ENCODE measurements at regions of chr2 and their contacts with region 1.

Region 1: DNA sequence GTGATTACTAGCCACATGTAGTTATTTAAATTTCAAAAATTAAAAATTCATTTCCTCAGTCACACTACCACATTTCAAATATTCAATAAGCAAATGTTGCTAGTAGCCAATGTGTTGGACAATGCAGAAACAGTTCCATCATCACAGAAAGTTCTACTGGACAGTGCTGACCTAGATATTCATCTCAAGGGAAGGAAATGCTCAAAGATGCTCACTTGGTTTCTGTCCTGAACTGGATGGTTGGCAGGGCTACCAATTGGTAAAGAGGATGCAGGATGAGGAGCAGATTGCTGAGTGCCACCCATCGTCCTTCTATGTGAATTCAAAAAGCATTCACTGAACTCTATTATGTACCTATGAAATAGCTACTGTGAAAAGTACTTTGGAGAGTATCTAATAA is 6.0 kb upstream of the UBXN2A start:
- DNase-seq: no peak
- ATAC-seq: no peak
- H3K4me3 ChIP-seq: no peak overlapping the region
- H3K27ac ChIP-seq: no peak overlapping the region
- H3K4me1 ChIP-seq: peaks cover under 1% of the 10 kb centered on the region; the same call in 1 of the 2 replicates
- H3K27me3 ChIP-seq: no peaks in the 10 kb centered on the region
- CTCF ChIP-seq: no peak
- POLR2A ChIP-seq: no peak
- RAD21 ChIP-seq: no peak

Region 2: DNA sequence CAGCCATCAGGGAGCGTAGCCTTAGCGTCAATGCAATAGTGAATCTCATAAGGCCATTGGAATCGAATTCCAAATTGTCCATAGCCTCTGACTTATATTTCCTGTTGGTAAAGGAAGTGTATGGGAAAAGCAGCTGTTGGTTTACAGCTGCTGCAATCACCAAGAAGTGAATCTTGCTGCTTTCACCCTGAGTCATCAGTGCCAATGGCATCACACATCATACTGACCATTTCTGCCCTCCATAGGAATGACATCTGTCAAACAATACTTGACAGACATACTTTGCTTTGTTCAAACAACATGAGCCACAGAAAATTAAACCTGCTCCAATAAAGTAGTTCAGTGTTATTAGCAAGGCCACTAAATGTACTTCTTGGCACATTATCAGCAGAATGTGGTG is 660.5 kb before region 1 on chr2:
- CTCF ChIA-PET with region 1: no interaction called
- POLR2A ChIA-PET with region 1: no interaction called
- dilution Hi-C with region 1: no loop called
- in situ Hi-C with region 1: no loop called
- intact Hi-C with region 1: no loop called
- DNase-seq: no peak
- ATAC-seq: no peak
- H3K4me3 ChIP-seq: no peak overlapping the region
- H3K27ac ChIP-seq: no peak overlapping the region
- H3K4me1 ChIP-seq: no peaks in the 10 kb centered on the region
- H3K27me3 ChIP-seq: peaks cover under 1% of the 10 kb centered on the region; the same call in 1 of the 2 replicates
- CTCF ChIP-seq: no peak
- POLR2A ChIP-seq: no peak
- RAD21 ChIP-seq: no peak

Region 3: GRCh38 chr2:23915327-23915726 is 18.9 kb before region 1 on chr2:
- CTCF ChIA-PET with region 1: no interaction called
- POLR2A ChIA-PET with region 1: interaction called, 11 read pairs
- dilution Hi-C with region 1: no loop called
- in situ Hi-C with region 1: no loop called
- intact Hi-C with region 1: no loop called
- DNase-seq: no peak
- ATAC-seq: no peak
- H3K4me3 ChIP-seq: no peak overlapping the region
- H3K27ac ChIP-seq: no peak overlapping the region
- H3K4me1 ChIP-seq: no peaks in the 10 kb centered on the region
- H3K27me3 ChIP-seq: no peaks in the 10 kb centered on the region
- CTCF ChIP-seq: no peak
- POLR2A ChIP-seq: no peak
- RAD21 ChIP-seq: no peak